HepG2 (cell line): ENCODE measurements at regions of chr2 and their contacts with region 1.

Region 1: GRCh38 chr2:54042897-54043620 is 72.3 kb upstream of the PSME4 start:
- DNase-seq: no peak
- ATAC-seq: no peak
- H3K4me3 ChIP-seq: no peak overlapping the region
- H3K27ac ChIP-seq: peak overlapping the region; percentile 85
- H3K4me1 ChIP-seq: peaks cover 34% of the 10 kb centered on the region
- H3K27me3 ChIP-seq: no peaks in the 10 kb centered on the region
- CTCF ChIP-seq: no peak
- EP300 ChIP-seq: no peak
- POLR2A ChIP-seq: no peak
- RAD21 ChIP-seq: no peak

Region 2: GRCh38 chr2:53473248-53473647 is 569.8 kb before region 1 on chr2:
- CTCF ChIA-PET with region 1: no interaction called
- POLR2A ChIA-PET with region 1: no interaction called
- in situ Hi-C with region 1: no loop called
- intact Hi-C with region 1: no loop called
- DNase-seq: peak; percentile 13
- ATAC-seq: peak; percentile 94
- H3K4me3 ChIP-seq: no peak overlapping the region
- H3K27ac ChIP-seq: no peak overlapping the region
- H3K4me1 ChIP-seq: no peaks in the 10 kb centered on the region
- H3K27me3 ChIP-seq: no peaks in the 10 kb centered on the region
- CTCF ChIP-seq: peak; percentile 66
- EP300 ChIP-seq: no peak
- POLR2A ChIP-seq: no peak
- RAD21 ChIP-seq: no peak

Region 3: DNA sequence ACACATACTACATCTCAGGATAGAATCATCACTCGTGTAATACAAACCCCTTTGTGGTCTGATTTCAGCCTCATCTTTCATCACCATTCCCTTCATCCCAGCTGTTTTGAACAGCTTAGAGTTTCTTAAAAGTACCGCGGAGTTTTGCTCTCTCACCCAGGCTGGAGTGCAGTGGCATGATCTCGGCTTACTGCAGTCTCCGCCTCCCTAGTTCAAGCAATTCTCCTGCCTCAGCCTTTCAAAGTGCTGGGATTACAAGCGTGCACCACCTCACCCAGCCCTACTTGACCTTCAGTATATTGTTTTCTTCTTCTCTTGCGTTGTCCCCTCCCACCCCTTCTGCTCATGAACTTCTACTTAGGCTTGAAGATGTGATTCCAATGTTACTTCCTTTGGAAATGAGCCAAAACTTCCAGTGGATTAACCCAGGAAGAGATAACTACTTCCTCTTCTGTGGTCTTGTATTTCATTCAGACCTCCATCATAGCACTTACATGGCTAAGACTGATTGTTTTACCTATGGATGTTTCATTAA is 240.4 kb before region 1 on chr2:
- CTCF ChIA-PET with region 1: no interaction called
- POLR2A ChIA-PET with region 1: no interaction called
- in situ Hi-C with region 1: no loop called
- intact Hi-C with region 1: no loop called
- DNase-seq: no peak
- ATAC-seq: no peak
- H3K4me3 ChIP-seq: no peak overlapping the region
- H3K27ac ChIP-seq: no peak overlapping the region
- H3K4me1 ChIP-seq: no peaks in the 10 kb centered on the region
- H3K27me3 ChIP-seq: no peaks in the 10 kb centered on the region
- CTCF ChIP-seq: no peak
- EP300 ChIP-seq: no peak
- POLR2A ChIP-seq: no peak
- RAD21 ChIP-seq: no peak

Region 4: GRCh38 chr2:53913721-53914120 is 129.3 kb before region 1 on chr2:
- CTCF ChIA-PET with region 1: no interaction called
- POLR2A ChIA-PET with region 1: no interaction called
- in situ Hi-C with region 1: no loop called
- intact Hi-C with region 1: no loop called
- DNase-seq: no peak
- ATAC-seq: no peak
- H3K4me3 ChIP-seq: no peak overlapping the region
- H3K27ac ChIP-seq: no peak overlapping the region
- H3K4me1 ChIP-seq: no peaks in the 10 kb centered on the region
- H3K27me3 ChIP-seq: no peaks in the 10 kb centered on the region
- CTCF ChIP-seq: no peak
- EP300 ChIP-seq: no peak
- POLR2A ChIP-seq: no peak
- RAD21 ChIP-seq: no peak

Region 5: GRCh38 chr2:54052825-54053718 is 10.0 kb after region 1 on chr2:
- CTCF ChIA-PET with region 1: no interaction called
- POLR2A ChIA-PET with region 1: interaction called, 13 read pairs
- in situ Hi-C with region 1: no loop called
- intact Hi-C with region 1: no loop called
- DNase-seq: no peak
- ATAC-seq: peak; percentile 40
- H3K4me3 ChIP-seq: no peak overlapping the region
- H3K27ac ChIP-seq: no peak overlapping the region
- H3K4me1 ChIP-seq: peaks cover 20% of the 10 kb centered on the region
- H3K27me3 ChIP-seq: no peaks in the 10 kb centered on the region
- CTCF ChIP-seq: peak; percentile 33; the same call in 1 of the 2 replicates
- EP300 ChIP-seq: no peak
- POLR2A ChIP-seq: no peak
- RAD21 ChIP-seq: no peak